Heart left ventricle (tissue), 16 donors: ENCODE measurements at regions of chr10 and their contacts with region 1.

Region 1: GRCh38 chr10:92419740-92420545 is 129.0 kb downstream of the MARCHF5 start:
- DNase-seq: peak; percentile 37 to 73 (median 62)
- ATAC-seq: peak in 3 of 4 donors; percentile 60 to 84 (median 62)
- H3K4me3 ChIP-seq: peak overlapping the region in 11 of 12 donors; percentile 33 to 57 (median 48)
- H3K27ac ChIP-seq: no peak overlapping the region
- H3K4me1 ChIP-seq: peaks cover 0 to 13% (median 4%) of the 10 kb centered on the region in 12 donors
- H3K27me3 ChIP-seq: no peaks in the 10 kb centered on the region
- CTCF ChIP-seq: peak; percentile 18 to 60 (median 42)
- POLR2A ChIP-seq: no peak

Region 2: GRCh38 chr10:92303096-92303495 is 116.8 kb before region 1 on chr10:
- intact Hi-C with region 1: no loop called
- DNase-seq: no peak
- ATAC-seq: no peak
- H3K4me3 ChIP-seq: no peak overlapping the region
- H3K27ac ChIP-seq: no peak overlapping the region
- H3K4me1 ChIP-seq: peaks cover 0 to 40% (median 31%) of the 10 kb centered on the region in 12 donors
- H3K27me3 ChIP-seq: no peaks in the 10 kb centered on the region
- CTCF ChIP-seq: no peak
- POLR2A ChIP-seq: no peak

Region 3: DNA sequence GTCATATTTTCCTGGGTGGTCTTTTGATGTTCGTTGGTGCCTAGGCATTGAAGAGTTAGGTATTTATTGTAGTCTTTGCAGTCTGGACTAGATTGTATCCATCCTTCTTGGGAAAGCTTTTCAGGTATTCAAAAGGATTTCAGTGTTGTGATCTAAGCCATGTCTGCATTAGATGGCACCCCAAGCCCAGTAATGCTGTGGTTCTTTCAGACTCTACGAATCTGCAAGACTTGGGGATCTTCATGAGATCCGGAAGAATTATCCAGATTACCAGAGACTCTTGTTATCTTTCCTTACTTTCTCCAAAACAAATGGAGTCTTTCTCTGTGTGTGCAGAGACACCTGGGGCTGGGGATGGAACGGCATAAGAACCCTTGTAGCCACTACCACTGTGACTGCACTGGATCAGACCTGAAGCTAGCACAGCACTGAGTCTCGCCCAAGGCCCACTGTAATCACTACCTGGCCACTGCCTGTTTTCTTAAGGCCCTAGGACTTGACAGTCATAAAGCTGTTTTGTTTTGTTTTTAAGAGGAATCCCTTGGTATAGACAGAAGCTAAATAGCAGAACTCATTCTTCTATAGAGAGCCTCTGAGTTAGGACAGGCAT is 53.4 kb before region 1 on chr10:
- intact Hi-C with region 1: loop called in 1 of 10 experiments (anchors 10 kb)
- DNase-seq: no peak
- ATAC-seq: no peak
- H3K4me3 ChIP-seq: no peak overlapping the region
- H3K27ac ChIP-seq: no peak overlapping the region
- H3K4me1 ChIP-seq: no peaks in the 10 kb centered on the region
- H3K27me3 ChIP-seq: no peaks in the 10 kb centered on the region
- CTCF ChIP-seq: peak in 2 of 12 donors; percentile 7 to 21
- POLR2A ChIP-seq: no peak

Region 4: DNA sequence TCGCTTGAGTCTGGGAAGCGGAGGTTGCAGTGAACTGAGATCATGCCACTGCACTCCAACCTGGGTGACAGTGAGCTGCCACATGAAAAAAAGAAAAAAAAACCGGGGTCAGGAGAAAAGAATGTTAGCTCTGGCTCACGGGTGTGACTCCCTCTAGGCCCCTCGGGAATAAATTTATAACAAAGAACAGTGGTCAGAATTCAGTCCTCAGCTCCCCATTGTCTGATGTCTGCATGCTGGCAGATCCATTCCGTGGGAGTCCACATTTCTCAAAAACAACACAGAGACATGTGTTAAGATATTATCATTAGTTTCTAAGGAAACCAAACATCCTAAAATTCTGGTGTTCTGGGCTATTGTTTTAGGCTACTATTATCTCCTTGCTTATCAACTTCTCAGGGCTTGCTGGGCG is 38.4 kb before region 1 on chr10:
- intact Hi-C with region 1: loop called in 1 of 10 experiments (anchors 5 kb)
- DNase-seq: peak in 2 of 5 donors; percentile 24 to 44
- ATAC-seq: peak; percentile 26 to 96 (median 70)
- H3K4me3 ChIP-seq: no peak overlapping the region
- H3K27ac ChIP-seq: peak overlapping the region in 6 of 12 donors; percentile 43 to 74 (median 62)
- H3K4me1 ChIP-seq: peaks cover 0 to 14% (median 0%) of the 10 kb centered on the region in 12 donors
- H3K27me3 ChIP-seq: no peaks in the 10 kb centered on the region
- CTCF ChIP-seq: no peak
- POLR2A ChIP-seq: no peak